SK-N-SH (cell line): ENCODE measurements at regions of chr1 and their contacts with region 1.

Region 1: DNA sequence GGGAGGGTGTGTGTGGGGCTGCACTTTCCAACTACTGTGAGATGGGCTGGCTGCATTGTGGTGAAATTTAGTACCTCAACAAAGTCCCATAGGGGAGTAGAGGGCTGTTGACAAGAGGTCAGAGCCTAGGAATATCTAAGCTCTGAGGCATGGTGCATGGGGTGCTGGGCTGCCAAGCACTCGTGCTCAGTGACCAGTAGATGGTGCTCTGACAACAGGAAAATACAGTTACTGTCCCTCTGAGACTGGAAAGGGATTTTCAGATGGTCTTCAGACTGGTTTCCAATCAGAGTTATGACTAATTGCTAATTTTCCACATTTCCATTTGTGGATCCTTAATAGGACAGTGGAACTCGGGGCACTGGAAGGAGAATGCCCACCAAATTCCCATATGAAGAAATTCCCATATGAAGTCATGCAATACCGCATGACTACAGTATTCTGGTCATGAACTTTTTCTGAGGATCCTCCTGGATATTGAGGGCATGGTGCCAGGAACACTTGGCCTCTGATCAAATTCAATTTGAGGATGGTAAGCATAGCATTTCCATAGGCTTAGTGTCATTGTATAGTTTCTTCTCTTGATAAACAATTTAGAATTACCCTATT is 4.1 kb upstream of the CACNA1E start:
- DNase-seq: peak; percentile 78
- H3K4me3 ChIP-seq: no peak overlapping the region; a peak in 1 of 4 replicates
- H3K27ac ChIP-seq: no peak overlapping the region
- H3K4me1 ChIP-seq: no peaks in the 10 kb centered on the region
- H3K27me3 ChIP-seq: peaks cover 9% of the 10 kb centered on the region; the same call in 1 of the 2 replicates
- CTCF ChIP-seq: peak; percentile 82
- EP300 ChIP-seq: no peak
- RAD21 ChIP-seq: peak; percentile 88

Region 2: DNA sequence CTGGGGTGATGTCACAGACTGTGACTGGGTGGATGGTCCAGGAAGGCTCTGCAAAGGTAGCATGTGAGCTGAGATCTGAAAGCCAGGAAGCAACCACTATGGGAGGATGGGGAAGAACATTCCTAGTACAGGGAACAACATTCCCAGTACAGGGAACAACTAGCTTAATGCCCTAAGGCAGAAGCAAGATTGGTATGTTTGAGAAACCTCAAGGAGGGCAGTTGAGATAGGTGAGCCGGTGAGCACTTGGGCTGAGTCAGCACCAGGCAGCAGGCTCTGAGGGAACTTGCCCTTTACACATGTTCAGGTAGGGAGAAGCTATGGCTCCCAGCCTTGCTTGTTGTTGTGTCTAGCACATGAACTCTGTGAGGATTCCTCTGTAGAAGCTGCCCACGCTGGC is 20.2 kb before region 1 on chr1:
- CTCF ChIA-PET with region 1: interaction called, 10 read pairs
- POLR2A ChIA-PET with region 1: no interaction called
- DNase-seq: no peak
- H3K4me3 ChIP-seq: no peak overlapping the region
- H3K27ac ChIP-seq: no peak overlapping the region
- H3K4me1 ChIP-seq: no peaks in the 10 kb centered on the region
- H3K27me3 ChIP-seq: no peaks in the 10 kb centered on the region
- CTCF ChIP-seq: no peak
- EP300 ChIP-seq: no peak
- RAD21 ChIP-seq: no peak

Region 3: GRCh38 chr1:181541947-181542346 is 62.7 kb after region 1 on chr1:
- CTCF ChIA-PET with region 1: no interaction called
- POLR2A ChIA-PET with region 1: no interaction called
- DNase-seq: no peak
- H3K4me3 ChIP-seq: no peak overlapping the region
- H3K27ac ChIP-seq: no peak overlapping the region
- H3K4me1 ChIP-seq: no peaks in the 10 kb centered on the region
- H3K27me3 ChIP-seq: no peaks in the 10 kb centered on the region
- CTCF ChIP-seq: no peak
- EP300 ChIP-seq: no peak
- RAD21 ChIP-seq: no peak

Region 4: GRCh38 chr1:181676269-181676668 is 197.0 kb after region 1 on chr1:
- CTCF ChIA-PET with region 1: interaction called, 32 read pairs
- POLR2A ChIA-PET with region 1: no interaction called
- DNase-seq: peak; percentile 64
- H3K4me3 ChIP-seq: no peak overlapping the region
- H3K27ac ChIP-seq: no peak overlapping the region
- H3K4me1 ChIP-seq: no peaks in the 10 kb centered on the region
- H3K27me3 ChIP-seq: no peaks in the 10 kb centered on the region
- CTCF ChIP-seq: no peak
- EP300 ChIP-seq: no peak
- RAD21 ChIP-seq: peak; percentile 50

Region 5: DNA sequence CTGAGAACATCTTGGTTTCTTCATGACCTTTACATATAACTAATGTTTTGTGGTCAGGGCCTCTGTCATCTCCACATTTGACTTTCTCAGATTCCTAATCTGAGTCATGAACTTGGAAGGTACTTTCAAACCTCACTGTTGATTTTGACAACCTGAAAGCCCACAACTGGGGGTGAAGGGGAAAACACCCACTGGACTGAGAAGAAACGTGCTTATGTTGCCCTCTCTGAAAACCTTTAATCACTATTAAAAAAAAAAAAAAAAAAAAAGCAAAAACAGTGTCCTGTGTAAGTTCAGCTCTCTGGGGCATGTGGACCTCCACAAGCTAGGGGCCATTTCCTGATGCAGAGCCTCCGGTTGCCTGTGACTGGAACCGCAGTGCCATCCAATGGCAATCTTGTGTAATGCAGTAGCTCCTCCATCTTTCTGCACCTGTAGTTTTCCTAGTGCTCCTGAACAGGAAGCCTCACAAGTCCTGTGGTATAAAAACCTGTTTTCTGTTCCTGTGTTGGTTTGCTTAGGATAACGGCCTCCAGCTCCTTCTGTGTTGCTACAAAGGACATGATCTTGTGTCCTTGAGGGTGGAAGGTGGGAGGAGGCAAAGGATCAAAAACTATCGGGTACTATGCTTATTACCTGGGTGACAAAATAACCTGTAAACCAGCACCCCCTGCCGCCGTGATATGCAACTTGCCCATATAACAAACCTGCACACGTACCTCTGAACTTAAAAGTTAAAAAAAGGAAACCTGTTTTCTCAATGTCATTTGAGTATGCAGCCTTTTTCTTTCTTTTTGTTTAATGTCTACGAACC is 457.7 kb after region 1 on chr1:
- CTCF ChIA-PET with region 1: interaction called, 31 read pairs
- POLR2A ChIA-PET with region 1: no interaction called
- DNase-seq: peak; percentile 47
- H3K4me3 ChIP-seq: no peak overlapping the region; a peak in 1 of 4 replicates
- H3K27ac ChIP-seq: no peak overlapping the region
- H3K4me1 ChIP-seq: no peaks in the 10 kb centered on the region
- H3K27me3 ChIP-seq: no peaks in the 10 kb centered on the region
- CTCF ChIP-seq: 0 out of 2 replicates have a peak, but pooled peaks have one; percentile 19
- EP300 ChIP-seq: no peak
- RAD21 ChIP-seq: peak; percentile 62

Region 6: GRCh38 chr1:182054698-182055326 is 575.6 kb after region 1 on chr1:
- CTCF ChIA-PET with region 1: interaction called, 19 read pairs
- POLR2A ChIA-PET with region 1: no interaction called
- DNase-seq: peak; percentile 53
- H3K4me3 ChIP-seq: no peak overlapping the region; a peak in 1 of 4 replicates
- H3K27ac ChIP-seq: no peak overlapping the region
- H3K4me1 ChIP-seq: no peaks in the 10 kb centered on the region
- H3K27me3 ChIP-seq: no peaks in the 10 kb centered on the region
- CTCF ChIP-seq: peak; percentile 49
- EP300 ChIP-seq: no peak
- RAD21 ChIP-seq: peak; percentile 66

Region 7: GRCh38 chr1:182084487-182085316 is 605.5 kb after region 1 on chr1:
- CTCF ChIA-PET with region 1: interaction called, 51 read pairs
- POLR2A ChIA-PET with region 1: no interaction called
- DNase-seq: peak; percentile 81
- H3K4me3 ChIP-seq: peak overlapping the region in 1 of 2 experiments; percentile 40; a peak in 1 of 4 replicates
- H3K27ac ChIP-seq: no peak overlapping the region
- H3K4me1 ChIP-seq: no peaks in the 10 kb centered on the region; a peak in 1 of 4 replicates
- H3K27me3 ChIP-seq: no peaks in the 10 kb centered on the region
- CTCF ChIP-seq: peak; percentile 56
- EP300 ChIP-seq: no peak
- RAD21 ChIP-seq: peak; percentile 84